ENCODE measurements at regions of chr1 and their contacts with region 1.

Region 1: GRCh38 chr1:71049951-71050598 is 2.5 kb upstream of the PTGER3 start:
- DNase-seq: peak; percentile 55
- CTCF ChIP-seq: peak; percentile 70

Region 2: DNA sequence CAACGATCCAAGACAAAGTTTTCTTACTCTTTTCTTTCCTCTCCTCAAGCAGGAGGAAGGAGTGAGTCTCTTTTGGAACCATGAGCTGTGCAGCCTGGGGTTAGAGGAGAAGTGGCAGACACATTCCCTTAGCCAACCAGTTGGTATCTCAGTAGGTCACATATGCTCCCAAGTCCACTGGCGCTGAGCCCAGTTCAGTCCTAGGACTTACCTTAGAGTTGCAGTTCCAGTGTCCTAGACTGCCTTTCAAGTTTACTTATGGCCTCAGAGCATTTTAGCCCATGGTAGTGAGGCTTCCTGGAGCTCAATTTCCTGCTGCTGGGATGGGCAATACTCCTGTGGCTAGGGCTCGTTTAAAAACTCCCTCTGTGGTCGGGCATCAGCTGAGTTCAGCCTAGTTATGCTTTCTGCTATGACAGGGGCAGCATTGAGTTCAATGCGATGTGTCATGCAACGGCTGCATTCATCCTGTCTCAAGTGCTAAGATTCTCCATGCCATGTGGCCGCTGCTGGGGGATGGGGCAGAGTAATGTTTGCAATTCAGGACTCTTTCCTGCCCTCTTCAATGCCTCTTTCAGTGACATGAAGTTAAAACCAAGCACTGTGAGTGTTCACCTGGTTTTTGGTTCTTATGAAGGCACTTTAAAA is 1378.6 kb before region 1 on chr1:
- CTCF ChIA-PET with region 1: no interaction called
- POLR2A ChIA-PET with region 1: no interaction called
- DNase-seq: no peak
- CTCF ChIP-seq: no peak

Region 3: GRCh38 chr1:70528590-70529333 is 521.3 kb before region 1 on chr1:
- CTCF ChIA-PET with region 1: interaction called, 16 read pairs
- POLR2A ChIA-PET with region 1: no interaction called
- DNase-seq: peak; percentile 35
- CTCF ChIP-seq: peak; percentile 58

Region 4: DNA sequence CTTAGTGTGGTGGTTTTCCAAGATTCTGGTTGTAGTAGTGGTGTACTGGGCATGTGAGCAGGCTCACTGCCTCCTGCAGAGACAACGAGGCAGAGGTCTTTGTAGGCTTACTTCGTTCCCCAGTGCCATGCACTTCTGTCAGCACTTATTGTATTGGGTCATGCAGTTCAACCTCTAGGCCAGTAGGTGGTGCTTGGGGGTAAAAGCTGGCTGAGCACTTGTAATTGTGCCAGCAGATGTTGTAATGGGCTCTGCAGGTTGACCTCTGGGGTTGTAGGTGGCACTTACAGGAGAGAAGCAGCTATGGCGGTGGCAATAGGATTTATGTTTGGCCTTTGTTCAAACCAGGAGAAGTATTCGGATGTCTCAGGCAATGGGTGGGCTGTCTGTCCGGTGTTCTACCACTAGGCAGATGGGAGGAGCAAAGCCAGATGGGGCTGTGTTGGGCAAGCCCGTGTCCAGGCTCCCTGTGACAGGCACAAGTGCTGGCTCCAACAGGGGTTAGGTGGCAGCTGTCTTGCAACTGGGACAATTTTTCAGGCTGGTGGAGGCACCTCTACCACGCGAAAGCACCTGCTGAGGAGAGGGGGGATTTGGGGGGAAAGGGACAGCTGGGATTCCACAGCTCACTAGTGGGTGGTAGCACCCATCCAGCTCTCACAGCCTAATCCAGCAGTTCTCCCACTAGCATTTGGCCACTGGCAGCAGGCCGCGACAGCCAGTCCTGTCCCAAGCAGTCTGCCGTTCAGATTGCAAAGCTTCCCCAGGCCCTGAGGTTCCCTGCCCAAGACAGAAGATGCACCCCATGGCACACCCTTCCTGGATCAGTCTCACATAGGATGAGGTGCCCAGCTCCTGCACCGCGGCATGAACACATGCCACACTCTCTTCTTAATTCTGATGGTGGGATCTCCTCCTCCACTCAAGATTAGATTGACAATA is 364.5 kb before region 1 on chr1:
- CTCF ChIA-PET with region 1: interaction called, 36 read pairs
- POLR2A ChIA-PET with region 1: no interaction called
- DNase-seq: peak; percentile 56
- CTCF ChIP-seq: peak; percentile 90

Region 5: DNA sequence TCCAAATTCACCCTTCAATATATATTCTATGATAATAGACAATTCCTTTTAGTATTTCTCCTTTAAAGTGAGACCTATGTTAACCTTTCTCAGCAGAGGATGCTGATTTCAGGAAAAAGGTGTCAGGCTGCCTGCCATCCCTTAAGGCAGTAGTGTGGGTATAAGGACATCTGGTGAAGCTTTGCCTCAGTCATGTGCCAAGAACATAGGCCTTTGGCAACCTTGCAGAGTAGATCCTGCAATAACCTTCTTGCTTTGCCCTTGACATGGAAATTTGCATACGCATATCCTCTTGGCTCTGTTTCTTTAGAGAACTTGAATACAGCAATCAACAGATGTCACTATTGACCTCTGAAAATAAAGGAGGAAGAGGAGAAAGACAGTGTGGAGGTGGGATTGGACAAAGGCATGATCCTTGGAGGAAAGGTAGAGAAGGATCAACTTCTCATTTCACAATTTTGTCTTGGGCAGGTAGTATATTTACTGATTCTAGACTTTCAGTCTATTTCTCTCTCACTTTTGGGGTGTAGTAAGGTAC is 51.8 kb after region 1 on chr1:
- CTCF ChIA-PET with region 1: no interaction called
- POLR2A ChIA-PET with region 1: no interaction called
- DNase-seq: no peak
- CTCF ChIP-seq: no peak